Common myeloid progenitor, CD34-positive (primary cell): ENCODE measurements at regions of chr4 and their contacts with region 1.

Region 1: DNA sequence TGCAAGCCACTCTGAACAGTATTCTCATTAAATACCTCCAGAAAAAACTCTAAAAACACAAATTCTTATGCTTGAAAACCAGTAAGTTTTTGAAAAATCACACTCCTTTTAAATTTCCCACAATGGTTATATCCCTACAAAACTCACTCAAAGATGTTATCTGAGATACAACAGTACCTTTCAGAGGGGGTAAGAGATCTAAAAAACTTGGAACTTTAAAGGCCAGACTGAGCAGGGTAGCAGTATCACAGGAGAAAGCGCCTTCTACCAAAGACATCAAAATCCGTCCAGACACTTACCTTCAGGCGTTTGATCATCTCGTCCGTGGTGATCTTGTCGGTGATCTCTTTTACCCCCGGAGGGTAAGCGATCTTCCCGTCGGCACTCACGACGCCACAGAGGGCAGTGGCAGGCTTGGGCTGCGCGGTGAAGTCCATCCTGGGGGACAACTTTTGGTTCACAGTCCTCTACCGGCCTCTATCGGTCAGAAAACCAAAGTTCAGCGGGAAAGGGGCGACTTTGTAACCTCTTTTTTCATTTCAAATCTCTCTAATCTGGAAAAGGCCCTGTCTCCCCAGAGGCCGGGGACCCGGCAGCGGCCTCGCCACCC is 1.5 kb downstream of the PDS5A start:
- DNase-seq: peak; percentile 85 to 88 (median 88)
- H3K4me3 ChIP-seq: peak overlapping the region; percentile 79 to 93 (median 87)
- H3K27ac ChIP-seq: peak overlapping the region; percentile 87 to 95
- H3K4me1 ChIP-seq: peaks cover 9 to 22% (median 15%) of the 10 kb centered on the region in 4 experiments
- H3K27me3 ChIP-seq: no peaks in the 10 kb centered on the region

Region 2: DNA sequence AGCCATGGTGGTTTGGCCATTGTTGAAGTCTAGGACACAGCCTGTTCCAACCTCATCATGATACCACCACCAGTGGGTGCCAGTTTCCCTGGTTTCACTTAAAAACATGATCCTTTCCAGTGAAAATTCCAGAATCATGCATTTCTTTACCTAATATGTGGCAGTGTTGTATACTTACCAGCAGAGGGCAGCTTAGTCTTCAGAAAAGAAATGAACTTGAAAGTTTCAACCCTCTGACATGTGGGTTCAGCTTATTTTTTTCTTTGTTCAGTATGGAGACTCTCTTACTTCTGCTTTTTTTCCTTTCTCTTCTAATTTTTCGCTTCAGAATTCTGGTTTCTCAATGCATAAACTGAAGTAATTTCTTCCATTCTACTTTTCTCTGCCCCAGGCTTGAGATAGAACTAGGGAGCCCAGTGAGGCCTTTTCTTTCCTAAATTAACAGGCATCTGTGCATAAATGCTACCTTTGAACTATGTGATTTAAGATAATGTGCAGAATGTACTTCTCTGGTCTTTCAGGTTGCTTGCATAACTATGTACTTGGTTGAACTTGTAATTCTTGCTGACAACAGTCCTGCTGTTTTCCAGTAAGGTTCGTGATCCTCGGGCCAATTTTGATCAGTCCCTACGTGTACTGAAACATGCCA is 506.7 kb before region 1 on chr4:
- CTCF ChIA-PET with region 1: interaction called, 11 read pairs
- POLR2A ChIA-PET with region 1: interaction called, 3 read pairs
- DNase-seq: peak; percentile 89 to 92 (median 92)
- H3K4me3 ChIP-seq: peak overlapping the region in 4 of 7 experiments; percentile 5 to 57 (median 45)
- H3K27ac ChIP-seq: peak overlapping the region; percentile 26 to 46
- H3K4me1 ChIP-seq: peaks cover 0 to 6% (median 5%) of the 10 kb centered on the region in 4 experiments
- H3K27me3 ChIP-seq: no peaks in the 10 kb centered on the region

Region 3: DNA sequence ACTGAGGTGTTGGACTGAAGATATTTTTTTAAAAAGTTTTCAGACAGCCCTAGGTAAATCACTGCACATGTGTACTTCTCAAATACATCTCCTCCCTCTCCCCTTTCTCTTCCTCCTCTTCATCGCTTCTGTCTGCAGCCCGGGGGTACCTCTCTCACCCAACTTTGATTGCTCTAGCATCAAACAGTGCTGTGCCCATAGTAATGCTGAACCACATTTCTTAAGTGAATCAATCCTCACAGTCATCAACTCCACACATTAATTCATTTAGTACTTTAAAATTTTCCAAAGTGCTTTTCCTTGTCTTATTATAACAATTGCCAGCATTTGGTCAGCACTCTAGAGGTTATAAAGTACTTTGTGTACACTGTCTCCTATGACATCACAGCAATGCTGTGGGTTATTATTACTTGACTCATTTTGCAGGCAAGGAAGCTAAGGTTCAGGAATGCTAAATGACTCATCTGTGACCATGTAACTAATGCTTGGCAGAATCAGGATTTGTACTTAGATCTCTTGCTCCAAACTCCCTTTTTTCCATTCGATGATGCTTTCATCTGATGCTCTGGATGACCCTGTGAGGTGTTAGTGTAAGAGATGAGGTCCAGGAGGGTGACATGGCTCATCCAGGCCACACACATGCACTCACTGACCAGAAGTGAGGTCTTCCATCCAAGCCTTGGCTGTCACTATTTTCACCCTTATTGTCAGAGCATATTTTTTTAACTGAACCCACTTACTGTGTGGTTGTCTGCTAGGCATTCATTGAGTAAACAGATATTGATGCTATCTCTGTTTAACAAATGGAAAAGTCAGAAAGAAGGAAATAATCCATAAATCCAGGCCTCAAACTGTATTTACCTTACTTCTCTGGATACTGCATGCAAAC is 279.4 kb after region 1 on chr4:
- CTCF ChIA-PET with region 1: no interaction called
- POLR2A ChIA-PET with region 1: no interaction called
- DNase-seq: peak in 2 of 3 donors; percentile 29 to 53
- H3K4me3 ChIP-seq: no peak overlapping the region
- H3K27ac ChIP-seq: no peak overlapping the region
- H3K4me1 ChIP-seq: peaks cover 0 to 23% (median 12%) of the 10 kb centered on the region in 4 experiments
- H3K27me3 ChIP-seq: no peaks in the 10 kb centered on the region

Region 4: GRCh38 chr4:40331101-40331824 is 355.0 kb after region 1 on chr4:
- CTCF ChIA-PET with region 1: no interaction called
- POLR2A ChIA-PET with region 1: no interaction called
- DNase-seq: no peak
- H3K4me3 ChIP-seq: no peak overlapping the region
- H3K27ac ChIP-seq: no peak overlapping the region
- H3K4me1 ChIP-seq: peaks cover 0 to 18% (median 13%) of the 10 kb centered on the region in 4 experiments
- H3K27me3 ChIP-seq: no peaks in the 10 kb centered on the region